Left ventricle myocardium inferior (tissue), 1 donor: ENCODE measurements at regions of chr3 and their contacts with region 1.

Region 1: GRCh38 chr3:147191795-147192385 is 214.5 kb downstream of the ZIC4 start:
- DNase-seq: no peak
- H3K4me3 ChIP-seq: no peak overlapping the region
- H3K27ac ChIP-seq: no peak overlapping the region
- H3K4me1 ChIP-seq: no peaks in the 10 kb centered on the region
- H3K27me3 ChIP-seq: no peaks in the 10 kb centered on the region
- CTCF ChIP-seq: peak; percentile 83

Region 2: GRCh38 chr3:146817704-146818103 is 374.2 kb before region 1 on chr3:
- intact Hi-C with region 1: loop called (anchors 10 kb)
- DNase-seq: no peak
- H3K4me3 ChIP-seq: no peak overlapping the region
- H3K27ac ChIP-seq: no peak overlapping the region
- H3K4me1 ChIP-seq: no peaks in the 10 kb centered on the region
- H3K27me3 ChIP-seq: no peaks in the 10 kb centered on the region
- CTCF ChIP-seq: peak; percentile 61

Region 3: DNA sequence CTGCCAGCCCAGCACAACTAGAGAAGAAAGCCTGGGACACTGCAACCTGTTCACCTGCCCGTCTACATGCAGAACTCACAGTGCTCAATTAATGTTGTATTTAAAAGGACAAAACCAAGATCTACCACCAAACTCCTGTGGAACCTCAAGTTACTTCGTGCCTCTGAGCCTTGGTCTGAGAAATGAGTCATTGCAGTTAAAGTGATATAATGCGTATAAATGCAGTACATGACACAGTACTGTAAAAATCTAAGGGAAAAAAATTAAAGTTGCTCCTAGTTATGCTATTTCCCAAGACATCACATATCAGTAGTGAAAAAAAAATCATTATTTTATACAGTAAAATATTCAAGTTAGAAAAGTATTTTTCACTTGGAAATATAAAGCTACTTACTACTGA is 75.5 kb after region 1 on chr3:
- intact Hi-C with region 1: no loop called
- DNase-seq: no peak
- H3K4me3 ChIP-seq: no peak overlapping the region
- H3K27ac ChIP-seq: no peak overlapping the region
- H3K4me1 ChIP-seq: no peaks in the 10 kb centered on the region
- H3K27me3 ChIP-seq: no peaks in the 10 kb centered on the region
- CTCF ChIP-seq: no peak

Region 4: DNA sequence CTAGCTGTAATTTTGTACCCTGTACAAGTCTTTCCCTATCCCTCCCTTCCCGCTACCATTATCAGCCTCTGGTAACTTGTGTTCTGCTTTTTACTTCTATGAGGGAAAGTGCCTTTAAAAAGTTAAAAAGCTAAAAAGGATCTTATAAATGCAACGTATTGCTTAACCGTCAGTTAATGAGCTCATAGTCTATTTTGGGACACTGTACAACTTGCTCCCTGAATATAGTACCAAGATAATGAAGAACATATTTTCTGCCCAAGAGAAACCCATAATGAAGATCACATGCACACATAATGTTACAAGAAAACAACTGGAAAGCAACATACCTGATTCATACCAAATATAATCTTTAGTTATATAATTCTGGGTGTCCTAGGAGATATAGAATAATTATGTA is 239.9 kb after region 1 on chr3:
- intact Hi-C with region 1: no loop called
- DNase-seq: no peak
- H3K4me3 ChIP-seq: no peak overlapping the region
- H3K27ac ChIP-seq: no peak overlapping the region
- H3K4me1 ChIP-seq: no peaks in the 10 kb centered on the region
- H3K27me3 ChIP-seq: peaks cover 82% of the 10 kb centered on the region
- CTCF ChIP-seq: no peak